ENCODE measurements at regions of chr1 and their contacts with region 1.

Region 1: DNA sequence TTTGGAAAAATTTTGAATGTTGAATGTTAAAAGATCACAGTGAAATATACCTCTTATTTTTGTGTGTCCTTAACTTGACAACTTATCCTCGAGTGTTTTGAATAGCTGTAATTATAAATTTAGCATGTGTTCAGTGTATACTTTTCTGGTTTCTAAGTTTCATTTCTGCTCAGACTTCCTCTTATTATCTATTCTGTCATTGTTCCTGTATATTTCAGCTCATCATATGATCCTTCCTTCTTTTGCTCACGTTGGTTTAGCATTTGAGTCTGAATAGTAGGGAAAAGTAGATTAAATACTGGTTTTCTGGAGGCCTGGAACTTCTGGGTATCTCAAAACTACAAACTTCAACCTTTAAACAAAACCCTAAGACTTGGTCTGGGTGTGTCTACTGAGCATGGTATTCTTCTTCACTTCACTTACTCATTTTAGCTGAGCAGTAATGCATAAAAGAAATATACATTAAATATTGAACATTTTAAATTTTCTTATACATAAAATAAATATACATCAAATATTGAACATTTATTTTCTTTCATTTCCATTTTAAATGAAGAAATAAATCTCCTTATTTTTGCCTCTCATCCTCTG is 3.3 kb upstream of the ATP6V1G3 start:
- DNase-seq: no peak
- H3K4me3 ChIP-seq: no peak overlapping the region
- H3K27ac ChIP-seq: no peak overlapping the region
- H3K4me1 ChIP-seq: no peaks in the 10 kb centered on the region
- H3K27me3 ChIP-seq: no peaks in the 10 kb centered on the region
- CTCF ChIP-seq: no peak

Region 2: GRCh38 chr1:197541411-197541810 is 1002.4 kb before region 1 on chr1:
- CTCF ChIA-PET with region 1: interaction called, 26 read pairs
- POLR2A ChIA-PET with region 1: no interaction called
- intact Hi-C with region 1: no loop called
- DNase-seq: no peak
- H3K4me3 ChIP-seq: no peak overlapping the region
- H3K27ac ChIP-seq: no peak overlapping the region
- H3K4me1 ChIP-seq: no peaks in the 10 kb centered on the region
- H3K27me3 ChIP-seq: no peaks in the 10 kb centered on the region
- CTCF ChIP-seq: no peak

Region 3: GRCh38 chr1:198391393-198392046 is 152.2 kb before region 1 on chr1:
- CTCF ChIA-PET with region 1: no interaction called
- POLR2A ChIA-PET with region 1: no interaction called
- intact Hi-C with region 1: no loop called
- DNase-seq: no peak
- H3K4me3 ChIP-seq: no peak overlapping the region
- H3K27ac ChIP-seq: no peak overlapping the region
- H3K4me1 ChIP-seq: no peaks in the 10 kb centered on the region
- H3K27me3 ChIP-seq: no peaks in the 10 kb centered on the region
- CTCF ChIP-seq: no peak

Region 4: GRCh38 chr1:198575292-198575691 is 31.5 kb after region 1 on chr1:
- CTCF ChIA-PET with region 1: no interaction called
- POLR2A ChIA-PET with region 1: no interaction called
- intact Hi-C with region 1: no loop called
- DNase-seq: no peak
- H3K4me3 ChIP-seq: no peak overlapping the region
- H3K27ac ChIP-seq: no peak overlapping the region
- H3K4me1 ChIP-seq: no peaks in the 10 kb centered on the region
- H3K27me3 ChIP-seq: no peaks in the 10 kb centered on the region
- CTCF ChIP-seq: no peak